HEK293T (cell line): ENCODE measurements at regions of chr6 and their contacts with region 1.

Region 1: DNA sequence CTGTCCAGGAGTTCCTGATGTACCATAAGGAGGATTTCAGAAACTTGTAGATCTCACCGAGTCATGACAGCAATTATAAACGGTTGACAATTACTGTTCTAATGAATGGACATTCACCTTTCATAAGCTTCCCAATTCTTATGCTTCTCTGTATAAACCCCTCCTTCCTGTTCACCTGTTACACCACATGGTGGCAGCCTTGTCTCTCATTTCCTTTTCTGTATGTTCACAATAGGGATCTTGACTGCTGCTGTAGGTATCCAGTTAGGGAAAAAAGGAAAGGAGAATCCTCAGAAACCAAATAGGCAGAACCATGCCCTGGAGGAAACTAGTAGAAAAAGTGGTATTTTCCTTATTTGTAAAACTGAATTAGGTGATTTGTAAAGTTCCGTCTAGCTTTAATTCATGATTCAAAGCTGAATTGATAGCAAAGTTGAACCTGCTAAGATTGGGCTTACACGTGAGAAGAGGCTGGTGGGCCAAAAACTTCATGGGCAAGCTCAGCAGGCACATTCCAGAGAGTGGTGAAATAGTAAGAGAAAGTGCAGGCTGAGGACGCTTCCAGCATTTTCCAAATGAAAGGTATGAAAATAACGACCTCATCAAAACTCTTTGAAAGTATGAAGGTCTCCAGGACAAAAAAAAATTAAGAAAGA is 29.0 kb upstream of the TBPL1 start:
- DNase-seq: peak; percentile 70

Region 2: GRCh38 chr6:133568970-133569889 is 354.8 kb before region 1 on chr6:
- CTCF ChIA-PET with region 1: interaction called, 15 read pairs
- POLR2A ChIA-PET with region 1: no interaction called
- DNase-seq: peak; percentile 69

Region 3: GRCh38 chr6:133837801-133838349 is 86.2 kb before region 1 on chr6:
- CTCF ChIA-PET with region 1: interaction called, 10 read pairs
- POLR2A ChIA-PET with region 1: no interaction called
- DNase-seq: peak; percentile 85

Region 4: DNA sequence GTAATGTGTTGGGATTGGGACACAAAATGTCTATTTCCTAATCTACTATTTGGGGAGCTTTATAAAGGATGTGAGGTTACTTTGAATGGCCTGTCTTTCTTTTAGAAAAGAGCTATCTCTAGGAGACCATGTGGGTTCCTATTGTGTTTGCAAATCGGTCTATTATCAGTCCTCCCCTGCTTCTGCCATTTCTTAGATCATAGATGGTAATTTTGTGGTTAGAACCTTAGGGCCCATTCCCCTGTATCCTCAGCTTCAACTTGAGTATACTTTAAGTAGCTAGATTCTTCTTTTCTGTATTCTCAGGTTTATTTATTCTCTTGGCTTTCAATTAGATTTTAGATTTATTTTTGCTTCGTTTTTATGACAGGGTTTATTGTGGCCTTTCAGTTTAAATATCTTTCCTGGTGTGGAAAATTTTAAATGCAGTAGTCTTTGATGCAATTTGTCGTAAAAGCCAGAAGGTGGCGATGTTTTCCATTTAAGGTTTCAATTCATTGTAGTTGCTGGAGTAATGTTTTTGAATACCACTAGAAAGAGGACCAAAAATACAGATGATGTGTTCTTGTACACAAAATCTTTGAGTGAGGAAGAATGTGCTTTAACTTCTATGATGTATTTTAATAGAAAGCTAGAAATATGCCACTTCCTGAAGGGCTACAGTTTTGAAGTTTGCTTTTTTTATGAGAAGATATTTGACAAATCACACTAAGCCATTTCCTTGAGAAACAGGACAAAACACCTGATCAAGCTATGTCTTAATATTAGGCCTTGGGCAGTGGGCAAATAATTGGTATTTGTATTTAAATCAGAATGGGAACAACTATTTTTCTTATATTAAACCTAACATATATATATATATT is 49.3 kb after region 1 on chr6:
- CTCF ChIA-PET with region 1: interaction called, 11 read pairs
- POLR2A ChIA-PET with region 1: no interaction called
- DNase-seq: peak; percentile 42

Region 5: DNA sequence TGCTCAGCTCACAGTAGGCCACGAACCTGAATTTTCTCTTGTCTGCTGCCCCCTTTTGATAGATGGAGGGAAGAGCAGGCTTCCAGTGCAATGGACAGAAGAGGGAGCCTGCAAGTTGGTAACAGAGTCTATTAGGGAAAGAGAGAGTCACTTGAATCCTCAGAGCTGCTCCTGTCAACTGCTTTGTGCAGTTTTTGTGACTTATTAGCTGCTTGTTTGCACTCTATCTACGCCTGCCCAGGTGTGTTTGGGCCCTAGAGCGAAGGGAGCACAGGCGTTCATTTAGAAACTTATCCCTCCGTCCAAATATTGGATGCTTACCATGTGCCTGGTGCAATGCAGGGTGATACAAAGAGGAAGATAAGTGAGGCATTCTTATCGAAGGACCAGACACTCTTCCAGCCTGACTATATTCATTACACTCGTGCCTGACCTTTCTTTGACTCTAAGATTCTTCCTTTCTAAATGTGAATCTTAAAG is 139.9 kb after region 1 on chr6:
- CTCF ChIA-PET with region 1: interaction called, 34 read pairs
- POLR2A ChIA-PET with region 1: no interaction called
- DNase-seq: peak; percentile 90

Region 6: DNA sequence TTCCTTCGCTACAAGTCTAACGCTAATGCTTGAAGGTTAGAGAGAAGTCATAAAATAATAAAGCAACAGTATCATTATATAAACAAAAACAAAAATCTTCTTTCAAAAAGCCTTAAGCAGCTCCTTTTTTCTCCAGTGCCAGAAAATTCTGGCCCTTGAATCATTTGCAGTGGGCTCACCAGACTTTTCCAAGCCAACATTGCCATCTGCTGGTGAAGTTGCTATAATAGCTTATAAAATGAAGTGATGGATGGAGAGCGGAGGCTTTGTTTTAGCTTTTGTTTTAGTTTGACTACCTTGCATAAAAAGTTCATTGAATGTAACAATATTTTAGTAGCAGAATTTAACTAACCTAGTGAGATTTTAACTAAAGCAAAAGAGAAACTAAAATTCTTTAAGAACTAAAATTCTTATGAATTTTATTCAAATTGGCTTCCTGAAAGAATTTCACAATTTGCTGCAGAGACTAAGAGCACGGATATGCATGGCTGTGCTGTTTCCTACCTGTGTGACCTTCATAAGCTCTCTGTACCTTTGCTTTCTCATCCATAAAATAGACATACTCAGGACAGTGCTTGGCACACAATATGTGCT is 173.1 kb after region 1 on chr6:
- CTCF ChIA-PET with region 1: interaction called, 129 read pairs
- POLR2A ChIA-PET with region 1: interaction called, 4 read pairs
- DNase-seq: peak; percentile 76